A549 (cell line): ENCODE measurements at regions of chr17 and their contacts with region 1.

Region 1: GRCh38 chr17:42937712-42938596 is 26.3 kb downstream of the AARSD1 start:
- DNase-seq: peak; percentile 78 to 81
- ATAC-seq: peak; percentile 96
- H3K4me3 ChIP-seq: no peak overlapping the region
- H3K27ac ChIP-seq: no peak overlapping the region
- H3K4me1 ChIP-seq: no peaks in the 10 kb centered on the region
- CTCF ChIP-seq: peak; percentile 93
- EP300 ChIP-seq: no peak
- POLR2A ChIP-seq: no peak
- RAD21 ChIP-seq: peak; percentile 97 to 98

Region 2: DNA sequence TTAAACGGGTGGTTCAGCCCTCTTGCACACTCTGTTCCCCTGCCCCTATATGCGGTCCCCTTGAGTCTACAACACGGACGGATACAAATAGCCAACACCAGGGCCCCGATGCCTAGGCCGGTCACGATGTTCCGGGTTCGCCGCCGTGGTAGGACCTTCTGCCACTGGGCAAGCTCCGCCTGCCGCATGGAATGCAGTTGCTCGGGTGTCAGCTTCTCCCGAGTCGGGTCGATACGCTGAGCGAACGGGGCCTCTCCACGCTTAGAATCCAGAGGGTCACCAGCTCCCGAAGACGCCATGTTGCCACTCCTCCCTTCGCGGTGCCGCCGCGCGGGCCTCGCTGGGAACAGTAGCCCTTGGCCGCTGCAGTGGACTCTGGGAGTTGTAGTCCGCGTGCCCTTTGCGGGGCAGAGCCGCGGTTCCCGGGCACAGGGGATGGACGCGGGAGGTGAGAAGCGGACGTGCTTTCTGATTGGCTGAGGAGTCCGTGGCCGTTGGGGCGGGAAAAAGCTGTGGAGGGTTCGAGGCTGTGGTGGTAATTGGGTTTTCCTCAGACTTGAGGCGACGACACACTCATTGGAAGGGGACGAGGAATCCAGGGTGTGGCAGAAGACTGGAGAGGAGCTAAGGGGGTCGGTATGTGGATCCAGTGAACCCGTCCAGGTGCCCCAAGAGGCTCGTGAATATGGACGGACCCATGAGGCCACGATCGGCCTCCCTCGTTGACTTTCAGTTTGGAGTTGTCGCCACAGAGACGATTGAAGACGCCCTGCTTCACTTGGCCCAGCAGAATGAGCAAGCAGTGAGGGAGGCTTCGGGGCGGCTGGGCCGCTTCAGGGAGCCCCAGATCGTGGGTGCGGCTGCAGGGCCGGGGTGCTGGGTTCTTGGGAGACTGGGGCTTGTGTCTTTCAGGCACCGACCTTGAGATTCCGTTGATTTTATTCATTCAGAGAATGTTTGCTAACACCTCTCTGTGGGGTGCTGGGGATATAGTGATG is 139.3 kb before region 1 on chr17 and contains the starts of genes CNTD1 and COA3:
- CTCF ChIA-PET with region 1: interaction called, 10 read pairs
- POLR2A ChIA-PET with region 1: no interaction called
- DNase-seq: peak; percentile 92 to 96
- ATAC-seq: peak; percentile 97 to 99
- H3K4me3 ChIP-seq: peak within 1 kb of the TSS; percentile 72
- H3K27ac ChIP-seq: peak within 1 kb of the TSS; percentile 83 to 92
- H3K4me1 ChIP-seq: peaks cover 38% of the 10 kb centered on the region
- CTCF ChIP-seq: no peak
- EP300 ChIP-seq: no peak
- POLR2A ChIP-seq: peak; percentile 81
- RAD21 ChIP-seq: no peak
- polyA plus RNA-seq, gene CNTD1: 0.06 and 0.07 TPM in 2 replicates
- polyA plus RNA-seq, gene COA3: 126 and 170 TPM in 2 replicates

Region 3: DNA sequence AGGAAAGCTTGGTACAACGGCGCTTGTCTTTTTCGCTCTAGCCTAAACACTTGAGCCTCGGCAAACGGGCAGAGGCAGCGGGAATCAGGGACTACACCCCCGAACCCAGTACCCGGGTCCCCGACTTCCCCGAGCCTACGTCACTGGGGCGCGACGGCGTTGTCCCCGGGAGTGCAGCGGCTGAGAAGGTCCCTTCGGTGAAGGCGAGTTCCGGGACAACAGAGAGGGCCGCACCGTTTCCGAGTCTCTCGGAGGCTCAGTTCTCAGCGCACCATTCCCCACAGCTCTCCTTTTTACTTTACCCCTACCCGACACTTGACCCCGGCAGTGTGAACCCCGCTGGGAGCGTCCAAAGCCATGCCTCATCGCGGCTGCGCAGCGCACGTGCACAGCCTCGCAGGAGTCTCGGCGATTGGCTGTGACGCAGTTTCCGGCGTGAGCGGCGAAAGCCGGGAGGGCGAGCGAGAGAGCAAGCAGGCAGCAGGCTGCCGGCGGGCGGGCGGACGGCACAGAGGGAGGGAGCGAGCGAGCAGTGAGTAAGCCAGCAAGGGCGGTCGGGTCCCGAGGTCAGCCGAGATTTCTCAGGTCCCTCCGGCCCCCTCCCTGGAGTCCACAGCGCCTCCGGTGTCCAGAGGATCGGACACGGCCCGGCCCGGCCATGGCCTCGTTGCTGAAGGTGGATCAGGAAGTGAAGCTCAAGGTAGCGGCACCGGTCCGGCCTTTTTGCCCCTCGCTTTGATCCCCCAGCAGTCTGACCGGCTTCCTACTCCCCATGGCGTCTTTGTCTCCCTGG is 104.8 kb before region 1 on chr17 and contains the start of gene PSME3:
- CTCF ChIA-PET with region 1: interaction called, 372 read pairs
- POLR2A ChIA-PET with region 1: no interaction called
- DNase-seq: peak; percentile 92 to 96
- ATAC-seq: peak; percentile 96 to 97
- H3K4me3 ChIP-seq: peak within 1 kb of the TSS; percentile 94
- H3K27ac ChIP-seq: peak within 1 kb of the TSS; percentile 95 to 96
- H3K4me1 ChIP-seq: peaks cover 22% of the 10 kb centered on the region
- CTCF ChIP-seq: no peak
- EP300 ChIP-seq: no peak
- POLR2A ChIP-seq: peak; percentile 98
- RAD21 ChIP-seq: no peak; a peak in 1 of 5 replicates
- polyA plus RNA-seq, gene PSME3: 220 and 257 TPM in 2 replicates

Region 4: GRCh38 chr17:42853004-42853403 is 85.0 kb before region 1 on chr17:
- CTCF ChIA-PET with region 1: interaction called, 372 read pairs
- POLR2A ChIA-PET with region 1: no interaction called
- DNase-seq: no peak
- ATAC-seq: no peak; a peak in 1 of 6 replicates
- H3K4me3 ChIP-seq: no peak overlapping the region
- H3K27ac ChIP-seq: no peak overlapping the region
- H3K4me1 ChIP-seq: no peaks in the 10 kb centered on the region
- CTCF ChIP-seq: no peak
- EP300 ChIP-seq: no peak
- POLR2A ChIP-seq: no peak
- RAD21 ChIP-seq: no peak

Region 5: DNA sequence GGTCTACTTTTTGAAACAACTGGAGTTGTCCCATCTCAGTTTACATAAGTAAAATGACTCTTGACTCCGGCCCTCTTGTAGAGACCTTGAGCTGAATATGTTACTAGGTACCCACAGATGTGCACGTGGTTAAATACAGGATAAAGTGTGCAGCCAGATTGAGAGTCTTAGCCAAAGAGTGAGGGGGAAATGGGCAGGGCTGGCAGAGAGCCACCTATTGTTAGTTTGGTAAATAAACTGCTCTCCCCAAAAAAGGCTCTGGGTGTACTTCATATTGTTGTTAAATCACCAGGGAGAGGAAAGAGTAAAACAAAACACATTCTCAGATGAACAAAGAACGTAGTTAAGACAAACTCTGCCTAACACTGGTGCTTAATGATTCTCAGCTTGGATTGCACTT is 17.0 kb before region 1 on chr17:
- CTCF ChIA-PET with region 1: interaction called, 10 read pairs
- POLR2A ChIA-PET with region 1: no interaction called
- DNase-seq: no peak
- ATAC-seq: peak in 1 of 2 experiments; percentile 42; a peak in 3 of 6 replicates
- H3K4me3 ChIP-seq: no peak overlapping the region
- H3K27ac ChIP-seq: no peak overlapping the region
- H3K4me1 ChIP-seq: peaks cover 10% of the 10 kb centered on the region
- CTCF ChIP-seq: no peak
- EP300 ChIP-seq: no peak
- POLR2A ChIP-seq: no peak
- RAD21 ChIP-seq: no peak

Region 6: DNA sequence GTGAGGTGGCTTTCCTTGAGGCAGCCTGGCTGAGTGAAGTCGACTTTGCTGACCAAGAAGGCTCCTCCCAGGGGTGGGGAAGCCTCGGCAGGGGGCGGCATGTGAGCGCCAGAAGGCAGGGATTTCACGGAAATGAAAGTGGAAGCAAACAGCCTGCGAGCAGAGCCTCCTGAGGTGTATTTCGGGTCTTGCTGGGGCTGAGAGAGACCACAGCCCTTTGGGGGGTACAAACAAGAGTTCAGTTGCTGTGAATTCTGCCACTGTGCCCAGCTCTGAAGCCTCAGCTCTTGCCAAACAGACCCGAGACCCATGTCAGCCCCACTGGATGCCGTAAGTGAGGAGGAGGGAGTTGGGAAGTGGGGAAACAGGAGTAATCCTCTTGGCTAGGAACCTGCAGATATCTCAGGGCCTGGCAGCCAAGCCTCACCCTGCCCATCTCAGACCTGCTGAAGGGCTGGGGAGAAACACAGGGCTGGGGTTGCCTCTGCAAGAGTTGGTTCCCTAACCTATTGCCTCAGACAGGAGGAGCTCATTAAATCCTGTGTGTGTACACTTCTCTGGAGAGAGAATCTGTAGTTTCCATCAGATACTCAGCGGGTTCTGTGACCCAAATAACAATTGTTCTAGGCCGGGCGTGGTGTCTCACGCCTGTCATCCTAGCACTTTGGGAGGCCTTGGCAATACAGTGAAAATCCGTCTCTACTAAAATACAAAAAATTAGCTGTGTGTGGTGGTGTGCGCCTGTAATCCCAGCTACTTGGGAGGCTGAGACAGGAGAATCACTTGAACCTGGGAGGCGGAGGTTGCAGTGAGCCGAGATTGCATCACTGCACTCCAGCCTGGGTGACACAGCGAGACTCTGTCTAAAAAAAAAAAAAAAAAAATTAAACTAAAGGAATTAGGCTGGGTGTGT is 68.9 kb after region 1 on chr17 and contains the start of gene IFI35:
- CTCF ChIA-PET with region 1: no interaction called
- POLR2A ChIA-PET with region 1: no interaction called
- DNase-seq: peak; percentile 80 to 85
- ATAC-seq: peak; percentile 82 to 84
- H3K4me3 ChIP-seq: peak within 1 kb of the TSS; percentile 44
- H3K27ac ChIP-seq: peak within 1 kb of the TSS; percentile 83 to 92
- H3K4me1 ChIP-seq: peaks cover 32% of the 10 kb centered on the region; the same call in 2 of the 3 replicates
- CTCF ChIP-seq: peak; percentile 41
- EP300 ChIP-seq: no peak
- POLR2A ChIP-seq: peak; percentile 41; the same call in 1 of the 2 replicates
- RAD21 ChIP-seq: peak; percentile 59 to 66
- polyA plus RNA-seq, gene IFI35: 20.2 and 21.3 TPM in 2 replicates

Region 7: DNA sequence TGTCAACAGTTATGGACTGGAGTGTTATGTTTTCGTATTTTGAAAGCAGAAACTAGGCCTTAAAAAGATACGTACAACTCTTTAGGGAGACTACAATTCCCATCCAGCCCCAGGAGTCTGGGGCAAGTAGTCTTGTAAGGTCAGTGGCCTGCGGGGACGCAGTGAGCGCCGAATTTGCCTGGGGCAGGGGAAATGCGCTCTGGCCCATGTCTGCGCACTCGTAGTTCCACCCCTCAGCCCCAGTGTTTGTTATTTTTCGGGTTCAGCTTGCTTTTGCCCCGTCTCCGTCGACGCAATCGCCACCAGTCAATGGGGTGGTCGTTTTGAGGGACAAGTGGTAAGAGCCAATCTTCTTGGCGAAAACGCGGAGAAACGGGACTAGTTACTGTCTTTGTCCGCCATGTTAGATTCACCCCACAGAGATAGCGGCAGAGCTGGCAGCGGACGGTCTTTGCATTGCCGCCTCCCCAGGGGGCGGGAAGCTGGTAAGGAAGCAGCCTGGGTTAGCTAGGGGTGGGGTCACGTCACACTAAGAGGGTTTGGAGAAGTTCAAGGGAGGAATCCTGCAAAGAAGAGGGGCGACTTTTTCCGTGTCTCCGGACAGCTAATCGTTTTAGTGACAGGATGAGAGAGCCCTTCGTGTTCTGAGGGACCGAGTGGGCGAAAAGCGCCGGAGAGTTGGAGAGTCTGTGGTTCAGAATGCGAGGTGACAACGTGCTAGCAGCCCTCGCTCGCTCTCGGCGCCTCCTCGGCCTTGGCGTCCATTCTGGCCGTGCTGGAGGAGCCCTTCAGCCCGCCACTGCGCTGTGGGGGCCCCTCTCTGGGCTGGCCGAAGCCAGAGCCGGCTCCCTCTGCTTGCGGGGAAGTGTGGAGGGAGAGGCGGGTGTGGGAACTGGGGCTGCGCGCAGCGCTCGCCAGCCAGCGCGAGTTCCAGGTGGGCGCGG is 188.3 kb after region 1 on chr17:
- CTCF ChIA-PET with region 1: no interaction called
- POLR2A ChIA-PET with region 1: no interaction called
- DNase-seq: no peak
- ATAC-seq: no peak
- H3K4me3 ChIP-seq: peak overlapping the region; percentile 78
- H3K27ac ChIP-seq: peak overlapping the region; percentile 90
- H3K4me1 ChIP-seq: peaks cover 15% of the 10 kb centered on the region
- CTCF ChIP-seq: no peak
- EP300 ChIP-seq: peak in 1 of 2 experiments; percentile 7; a peak in 1 of 5 replicates
- POLR2A ChIP-seq: no peak
- RAD21 ChIP-seq: no peak